ENCODE measurements at regions of chr6 and their contacts with region 1.

Region 1: GRCh38 chr6:148947621-148948444 is 201.0 kb downstream of the UST start:
- DNase-seq: peak; percentile 61
- CTCF ChIP-seq: peak; percentile 89

Region 2: DNA sequence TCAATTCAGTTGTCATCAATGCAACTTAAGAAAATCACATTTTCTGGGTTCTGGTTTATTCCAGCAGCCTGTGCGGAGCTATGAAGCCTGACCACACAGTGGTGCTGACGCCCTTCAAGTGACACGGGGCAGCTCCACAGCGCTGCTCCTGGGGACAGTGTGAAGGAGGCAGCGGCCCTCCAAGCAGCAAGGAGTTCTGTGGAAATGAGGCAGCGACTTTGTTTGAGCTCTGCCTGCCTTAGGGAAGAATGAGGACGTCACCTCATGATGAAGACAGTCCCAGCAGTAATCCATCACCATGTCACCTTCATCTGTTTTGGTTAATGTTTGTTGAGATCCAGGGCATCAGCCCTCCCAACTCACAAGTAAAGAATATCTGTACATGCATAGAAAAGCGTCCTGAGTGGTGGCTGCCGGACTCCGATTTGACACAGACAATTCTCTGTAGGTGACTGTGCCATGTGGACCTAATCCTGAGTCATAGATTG is 369.5 kb before region 1 on chr6:
- in situ Hi-C with region 1: loop called (anchors 25 kb)
- DNase-seq: peak; percentile 73
- CTCF ChIP-seq: peak; percentile 98

Region 3: GRCh38 chr6:148746363-148747144 is 201.3 kb before region 1 on chr6 and contains the start of gene UST:
- in situ Hi-C with region 1: loop called (anchors 25 kb)
- DNase-seq: peak; percentile 82
- CTCF ChIP-seq: peak; percentile 69

Region 4: GRCh38 chr6:148811459-148811858 is 136.4 kb before region 1 on chr6:
- in situ Hi-C with region 1: no loop called
- DNase-seq: no peak
- CTCF ChIP-seq: no peak

Region 5: GRCh38 chr6:149112976-149113375 is 165.1 kb after region 1 on chr6:
- in situ Hi-C with region 1: no loop called
- DNase-seq: peak; percentile 28
- CTCF ChIP-seq: no peak

Region 6: DNA sequence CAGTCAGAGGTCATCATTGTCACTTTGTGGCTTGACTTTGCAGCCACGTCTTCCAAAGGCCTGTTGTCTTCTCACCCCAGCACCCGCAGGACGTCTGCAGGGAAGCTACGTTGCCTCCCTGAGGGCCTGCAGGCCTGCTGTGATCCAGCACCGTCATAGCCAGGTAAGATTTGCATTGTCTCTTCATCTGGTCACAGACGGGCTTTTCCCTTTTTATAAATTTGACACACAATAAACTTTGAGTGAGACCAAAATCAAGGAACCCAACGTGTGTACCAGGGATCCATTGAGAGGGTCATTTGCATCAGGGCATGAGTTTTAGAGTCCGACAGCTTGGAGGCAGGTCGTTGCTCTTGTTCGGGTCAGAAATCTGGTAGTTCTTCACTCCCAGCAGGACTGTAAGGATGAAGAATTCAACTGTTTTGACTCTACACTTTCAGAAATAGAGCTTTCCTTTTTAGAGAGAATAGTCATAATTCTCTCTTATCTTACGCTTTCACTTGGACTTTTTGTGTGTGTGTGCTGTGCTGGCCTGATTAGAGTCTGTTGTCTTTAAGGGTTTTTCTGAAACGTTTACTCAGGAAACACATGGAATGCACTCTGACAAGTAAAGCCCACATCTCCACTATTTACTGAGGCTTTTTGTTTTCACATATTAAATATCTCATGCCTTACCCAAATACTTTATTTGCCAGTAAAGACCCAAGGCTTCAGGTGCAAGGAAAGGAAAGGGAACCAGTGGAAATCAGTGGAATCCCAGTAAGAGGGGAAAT is 192.5 kb after region 1 on chr6:
- in situ Hi-C with region 1: no loop called
- DNase-seq: peak; percentile 27
- CTCF ChIP-seq: no peak